ENCODE measurements at regions of chr11 and their contacts with region 1.

Region 1: DNA sequence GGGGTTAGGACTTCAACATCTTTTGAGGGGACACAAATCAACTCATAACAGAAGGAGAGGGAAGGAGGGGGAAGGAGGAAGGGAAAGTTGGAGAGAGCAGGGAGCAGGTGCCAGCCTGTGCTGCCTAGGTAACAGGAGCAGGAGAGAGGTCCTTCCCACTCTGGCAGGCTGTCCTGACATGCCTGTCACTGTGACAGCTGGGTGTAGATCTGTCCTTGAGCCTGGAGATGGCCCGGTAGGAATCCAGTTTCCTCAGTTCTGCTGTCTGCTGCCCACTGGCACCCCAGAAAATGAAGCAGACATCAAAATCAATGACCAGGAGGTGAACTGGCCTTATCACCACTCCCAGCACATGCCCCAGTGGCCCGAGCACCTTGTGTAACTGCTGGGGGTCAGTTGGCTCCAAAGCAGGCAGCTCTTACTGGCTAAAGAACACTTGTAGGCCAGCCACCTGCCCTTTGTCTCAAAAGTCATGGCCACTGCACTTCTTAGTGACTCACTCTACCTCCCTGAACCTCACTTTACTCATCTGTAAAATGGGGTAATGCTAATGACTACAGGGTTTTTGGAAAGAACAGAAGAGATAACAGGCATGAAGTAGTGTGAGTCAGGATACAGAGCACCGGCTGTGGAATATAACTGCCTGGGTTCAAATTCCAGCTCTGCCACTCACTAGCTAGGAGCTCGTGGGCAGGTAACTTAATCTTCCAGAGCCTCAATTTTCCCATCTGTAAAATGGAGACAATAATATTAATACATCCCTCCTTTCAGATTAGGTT is 8.0 kb upstream of the TSPAN18 start:
- DNase-seq: no peak
- ATAC-seq: no peak
- H3K4me3 ChIP-seq: no peak overlapping the region
- H3K27ac ChIP-seq: no peak overlapping the region
- H3K4me1 ChIP-seq: peaks cover 0 to 4% (median 0%) of the 10 kb centered on the region in 12 donors
- H3K27me3 ChIP-seq: no peaks in the 10 kb centered on the region
- CTCF ChIP-seq: no peak
- POLR2A ChIP-seq: no peak

Region 2: GRCh38 chr11:44665834-44666233 is 53.0 kb before region 1 on chr11:
- intact Hi-C with region 1: loop called in 1 of 10 experiments (anchors 5 kb)
- DNase-seq: no peak
- ATAC-seq: no peak
- H3K4me3 ChIP-seq: no peak overlapping the region
- H3K27ac ChIP-seq: no peak overlapping the region
- H3K4me1 ChIP-seq: peaks cover 0 to 12% (median 1%) of the 10 kb centered on the region in 12 donors
- H3K27me3 ChIP-seq: no peaks in the 10 kb centered on the region
- CTCF ChIP-seq: no peak
- POLR2A ChIP-seq: no peak

Region 3: DNA sequence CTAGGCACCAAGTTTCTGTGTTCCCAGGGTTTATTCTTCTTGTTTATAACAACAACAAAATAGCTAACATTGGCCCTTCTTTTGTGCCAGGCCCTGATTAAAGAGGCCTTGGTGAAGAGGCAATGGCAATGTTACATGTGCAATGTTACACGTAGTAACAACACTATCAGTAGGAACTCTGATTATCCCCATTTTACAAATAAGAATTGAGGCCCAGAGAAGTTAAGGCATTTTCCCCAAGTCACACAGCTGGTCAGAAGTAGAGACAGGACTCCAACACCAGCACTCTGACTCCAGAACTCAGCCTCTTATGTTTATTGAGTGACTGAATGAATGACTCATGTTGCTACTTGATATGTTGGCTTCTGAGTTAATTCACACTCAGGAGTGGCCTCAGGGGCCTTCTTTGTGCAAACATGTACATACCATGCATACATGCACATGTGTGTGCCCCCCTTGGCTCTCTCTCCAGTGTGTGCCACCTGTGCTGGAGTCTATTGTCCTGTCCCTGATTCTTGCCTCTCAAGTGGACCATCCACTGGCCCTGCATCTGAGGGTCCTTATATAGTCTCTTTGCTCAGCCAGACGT is 133.5 kb after region 1 on chr11:
- intact Hi-C with region 1: no loop called
- DNase-seq: no peak
- ATAC-seq: no peak
- H3K4me3 ChIP-seq: no peak overlapping the region
- H3K27ac ChIP-seq: no peak overlapping the region
- H3K4me1 ChIP-seq: peaks cover 4 to 69% (median 25%) of the 10 kb centered on the region in 12 donors
- H3K27me3 ChIP-seq: no peaks in the 10 kb centered on the region
- CTCF ChIP-seq: no peak
- POLR2A ChIP-seq: no peak